IMR-90 (cell line): ENCODE measurements at regions of chr9 and their contacts with region 1.

Region 1: GRCh38 chr9:35481347-35481975 is 8.4 kb upstream of the RUSC2 start:
- DNase-seq: peak; percentile 75
- ATAC-seq: peak; percentile 78
- H3K4me3 ChIP-seq: no peak overlapping the region
- H3K27ac ChIP-seq: no peak overlapping the region
- H3K4me1 ChIP-seq: peaks cover 4% of the 10 kb centered on the region; the same call in 1 of the 2 replicates
- H3K27me3 ChIP-seq: peaks cover 3% of the 10 kb centered on the region; the same call in 1 of the 2 replicates
- CTCF ChIP-seq: peak; percentile 89
- POLR2A ChIP-seq: no peak
- RAD21 ChIP-seq: peak; percentile 89

Region 2: GRCh38 chr9:34989003-34989945 is 492.2 kb before region 1 on chr9 and contains the start of gene DNAJB5:
- CTCF ChIA-PET with region 1: no interaction called
- POLR2A ChIA-PET with region 1: no interaction called
- dilution Hi-C with region 1: no loop called
- in situ Hi-C with region 1: no loop called
- intact Hi-C with region 1: loop called (anchors 5 kb)
- DNase-seq: peak; percentile 100
- ATAC-seq: peak; percentile 87
- H3K4me3 ChIP-seq: peak within 1 kb of the TSS; percentile 60
- H3K27ac ChIP-seq: peak within 1 kb of the TSS; percentile 58
- H3K4me1 ChIP-seq: peaks cover 33% of the 10 kb centered on the region
- H3K27me3 ChIP-seq: no peaks in the 10 kb centered on the region
- CTCF ChIP-seq: no peak
- POLR2A ChIP-seq: peak; percentile 91; the same call in 1 of the 2 replicates
- RAD21 ChIP-seq: no peak
- total RNA-seq, gene DNAJB5: 11.7 and 14.9 TPM in 2 replicates

Region 3: DNA sequence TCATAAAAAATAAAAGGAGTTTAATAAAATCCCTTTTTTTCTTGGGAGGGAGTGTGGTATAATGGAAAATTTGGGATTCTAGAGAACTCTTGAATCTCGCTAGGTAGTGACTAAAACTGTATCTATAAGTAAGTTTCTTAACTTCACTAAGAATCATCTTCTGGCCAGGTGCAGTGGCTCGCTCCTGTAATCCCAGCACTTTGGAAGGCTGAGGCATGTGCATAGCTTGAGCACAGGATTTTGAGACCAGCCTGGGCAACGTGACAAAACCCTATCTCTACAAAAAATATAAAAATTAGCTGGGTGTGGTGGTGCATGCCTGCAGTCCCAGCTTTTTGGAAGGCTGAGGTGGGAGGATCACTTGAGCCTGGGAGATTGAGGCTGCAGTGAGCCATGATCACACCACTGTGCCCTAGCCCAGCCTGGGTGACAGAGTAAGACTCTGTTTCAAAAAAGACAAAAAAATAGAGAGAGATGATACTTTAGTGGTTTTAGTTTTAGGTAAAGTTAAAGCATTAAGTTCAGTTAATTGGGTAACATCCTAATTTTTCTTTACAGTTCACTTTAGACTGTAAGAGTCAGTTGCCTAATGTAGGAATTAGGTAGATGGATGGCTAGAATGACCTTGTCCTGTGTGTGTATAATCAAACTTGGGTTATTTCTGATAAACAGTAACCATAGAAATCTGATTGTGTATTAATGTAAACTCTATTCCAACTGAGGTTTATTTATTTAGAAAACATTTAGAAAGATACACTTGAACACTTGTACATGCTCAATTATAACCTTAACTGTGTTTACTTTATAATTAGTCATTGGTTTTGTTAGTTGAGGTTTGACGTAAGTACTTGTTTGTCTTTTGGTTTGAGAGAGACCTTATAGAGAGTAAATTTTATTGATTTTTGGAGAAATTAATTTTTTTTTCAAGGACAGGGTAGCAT is 301.8 kb before region 1 on chr9:
- CTCF ChIA-PET with region 1: no interaction called
- POLR2A ChIA-PET with region 1: no interaction called
- dilution Hi-C with region 1: no loop called
- in situ Hi-C with region 1: no loop called
- intact Hi-C with region 1: no loop called
- DNase-seq: no peak
- ATAC-seq: no peak
- H3K4me3 ChIP-seq: no peak overlapping the region
- H3K27ac ChIP-seq: no peak overlapping the region
- H3K4me1 ChIP-seq: no peaks in the 10 kb centered on the region
- H3K27me3 ChIP-seq: no peaks in the 10 kb centered on the region
- CTCF ChIP-seq: no peak
- POLR2A ChIP-seq: no peak
- RAD21 ChIP-seq: no peak

Region 4: DNA sequence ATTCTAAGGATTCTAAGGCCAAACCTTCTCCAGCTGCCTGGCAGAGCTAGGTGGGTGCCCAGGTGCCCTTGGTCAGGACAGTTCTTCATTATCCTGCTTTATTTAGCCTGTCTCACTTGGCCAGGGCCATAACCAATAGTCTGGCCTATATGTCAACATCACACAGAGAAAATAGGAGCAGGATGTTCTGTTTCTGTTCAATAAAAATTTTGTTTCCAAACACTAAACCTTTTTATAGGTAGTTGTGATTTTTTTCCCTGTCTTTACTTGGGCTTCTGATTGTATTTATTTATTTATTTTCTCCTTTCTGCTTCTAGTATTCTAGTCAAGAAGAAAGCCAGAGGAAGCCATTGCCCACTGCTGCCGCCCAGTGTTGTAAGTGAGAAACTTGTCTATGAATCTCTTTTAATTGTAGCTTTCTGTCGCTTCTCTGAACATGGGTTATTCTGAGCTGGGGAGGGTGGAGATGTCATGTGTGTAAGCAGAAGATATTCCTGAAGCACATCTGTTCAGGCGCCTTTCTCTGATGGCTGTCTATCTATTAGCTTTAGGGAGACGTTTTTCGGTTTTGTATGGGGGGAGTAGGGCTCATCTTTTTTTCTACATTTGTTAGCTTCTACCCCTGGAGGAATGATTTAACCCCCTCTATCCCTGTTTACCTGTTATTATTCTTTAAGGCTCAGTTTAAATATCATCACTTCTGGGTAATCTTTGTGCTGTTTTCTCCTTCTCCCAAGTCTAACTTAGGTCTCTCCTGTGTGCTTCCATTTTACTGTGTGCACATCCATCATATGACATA is 222.6 kb before region 1 on chr9:
- CTCF ChIA-PET with region 1: no interaction called
- POLR2A ChIA-PET with region 1: no interaction called
- dilution Hi-C with region 1: no loop called
- in situ Hi-C with region 1: no loop called
- intact Hi-C with region 1: loop called (anchors 1 kb)
- DNase-seq: peak; percentile 66
- ATAC-seq: peak; percentile 93
- H3K4me3 ChIP-seq: no peak overlapping the region
- H3K27ac ChIP-seq: no peak overlapping the region
- H3K4me1 ChIP-seq: no peaks in the 10 kb centered on the region
- H3K27me3 ChIP-seq: no peaks in the 10 kb centered on the region
- CTCF ChIP-seq: peak; percentile 74
- POLR2A ChIP-seq: no peak
- RAD21 ChIP-seq: peak; percentile 72

Region 5: DNA sequence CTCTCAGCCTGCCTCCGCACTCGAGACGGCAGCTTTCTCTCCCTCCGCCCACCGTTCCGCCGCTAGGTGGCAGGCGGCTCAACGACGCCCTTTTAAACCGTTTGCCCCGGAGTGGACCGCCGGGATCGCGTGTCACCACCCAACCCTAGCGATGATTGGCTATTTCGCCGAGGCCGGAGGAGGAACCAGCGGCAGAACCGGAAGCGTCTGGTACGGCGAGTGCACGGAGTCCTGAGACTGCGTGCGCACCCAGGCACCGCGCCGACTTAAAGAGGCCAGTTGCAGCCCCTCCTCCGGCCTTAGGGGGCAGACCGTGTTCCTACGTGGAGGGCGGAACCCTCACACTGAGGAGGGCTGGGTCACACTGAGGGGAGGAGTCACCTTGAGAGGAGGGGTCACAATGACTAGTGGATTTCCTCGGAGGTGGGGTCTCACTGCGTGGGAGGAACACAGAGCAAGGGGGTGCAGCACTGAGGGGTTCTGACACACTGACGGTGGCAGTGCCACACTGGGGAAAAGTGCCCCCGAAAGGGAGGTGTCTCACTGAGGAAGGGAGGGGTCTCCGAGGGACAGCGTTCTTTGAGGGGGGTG is 122.6 kb after region 1 on chr9:
- CTCF ChIA-PET with region 1: no interaction called
- POLR2A ChIA-PET with region 1: no interaction called
- dilution Hi-C with region 1: no loop called
- in situ Hi-C with region 1: no loop called
- intact Hi-C with region 1: loop called (anchors 2 kb)
- DNase-seq: peak; percentile 99
- ATAC-seq: peak; percentile 94
- H3K4me3 ChIP-seq: peak overlapping the region; percentile 53
- H3K27ac ChIP-seq: peak overlapping the region; percentile 75
- H3K4me1 ChIP-seq: peaks cover 5% of the 10 kb centered on the region
- H3K27me3 ChIP-seq: no peaks in the 10 kb centered on the region
- CTCF ChIP-seq: peak; percentile 82
- POLR2A ChIP-seq: peak; percentile 85
- RAD21 ChIP-seq: peak; percentile 62